ENCODE measurements at regions of chr5 and their contacts with region 1.

Region 1: GRCh38 chr5:179858586-179859427 is at the start of gene MRNIP:
- DNase-seq: peak; percentile 95
- H3K27ac ChIP-seq: peak within 1 kb of the TSS; percentile 88
- CTCF ChIP-seq: no peak

Region 2: DNA sequence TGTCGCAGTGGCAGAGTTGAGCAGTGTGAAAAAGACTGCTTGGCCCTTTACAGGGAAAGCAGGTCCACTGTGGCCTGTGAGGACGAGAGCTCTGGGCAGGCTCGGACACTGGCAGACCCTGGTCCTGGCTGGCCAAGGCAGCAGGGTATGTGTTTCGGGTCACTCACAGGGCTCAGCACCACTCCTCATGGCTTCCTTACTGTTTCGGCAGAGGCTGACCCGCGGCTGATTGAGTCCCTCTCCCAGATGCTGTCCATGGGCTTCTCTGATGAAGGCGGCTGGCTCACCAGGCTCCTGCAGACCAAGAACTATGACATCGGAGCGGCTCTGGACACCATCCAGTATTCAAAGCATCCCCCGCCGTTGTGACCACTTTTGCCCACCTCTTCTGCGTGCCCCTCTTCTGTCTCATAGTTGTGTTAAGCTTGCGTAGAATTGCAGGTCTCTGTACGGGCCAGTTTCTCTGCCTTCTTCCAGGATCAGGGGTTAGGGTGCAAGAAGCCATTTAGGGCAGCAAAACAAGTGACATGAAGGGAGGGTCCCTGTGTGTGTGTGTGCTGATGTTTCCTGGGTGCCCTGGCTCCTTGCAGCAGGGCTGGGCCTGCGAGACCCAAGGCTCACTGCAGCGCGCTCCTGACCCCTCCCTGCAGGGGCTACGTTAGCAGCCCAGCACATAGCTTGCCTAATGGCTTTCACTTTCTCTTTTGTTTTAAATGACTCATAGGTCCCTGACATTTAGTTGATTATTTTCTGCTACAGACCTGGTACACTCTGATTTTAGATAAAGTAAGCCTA is 22.4 kb before region 1 on chr5:
- CTCF ChIA-PET with region 1: no interaction called
- POLR2A ChIA-PET with region 1: no interaction called
- DNase-seq: peak; percentile 30
- H3K27ac ChIP-seq: peak overlapping the region; percentile 78
- CTCF ChIP-seq: no peak

Region 3: DNA sequence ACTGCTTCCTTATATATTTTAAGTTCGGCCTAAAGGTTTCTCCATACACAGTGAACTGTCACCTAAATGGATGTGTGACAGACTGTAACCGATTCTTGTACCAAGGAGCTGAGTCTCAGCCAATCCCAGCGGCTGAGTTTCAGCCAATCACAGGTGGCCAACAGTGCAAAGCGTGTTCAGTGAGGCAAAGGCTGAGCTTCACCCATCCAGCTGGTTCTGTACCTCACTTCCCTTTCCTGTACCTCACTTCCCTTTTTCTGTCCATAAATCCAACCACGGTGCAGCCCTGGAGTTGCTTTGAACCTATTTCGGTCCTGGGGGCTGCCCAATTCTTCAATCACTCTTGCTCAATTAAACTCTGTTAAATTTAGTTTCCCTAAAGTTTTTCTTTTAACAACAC is 64.6 kb after region 1 on chr5:
- CTCF ChIA-PET with region 1: no interaction called
- POLR2A ChIA-PET with region 1: no interaction called
- DNase-seq: no peak
- H3K27ac ChIP-seq: no peak overlapping the region
- CTCF ChIP-seq: no peak

Region 4: DNA sequence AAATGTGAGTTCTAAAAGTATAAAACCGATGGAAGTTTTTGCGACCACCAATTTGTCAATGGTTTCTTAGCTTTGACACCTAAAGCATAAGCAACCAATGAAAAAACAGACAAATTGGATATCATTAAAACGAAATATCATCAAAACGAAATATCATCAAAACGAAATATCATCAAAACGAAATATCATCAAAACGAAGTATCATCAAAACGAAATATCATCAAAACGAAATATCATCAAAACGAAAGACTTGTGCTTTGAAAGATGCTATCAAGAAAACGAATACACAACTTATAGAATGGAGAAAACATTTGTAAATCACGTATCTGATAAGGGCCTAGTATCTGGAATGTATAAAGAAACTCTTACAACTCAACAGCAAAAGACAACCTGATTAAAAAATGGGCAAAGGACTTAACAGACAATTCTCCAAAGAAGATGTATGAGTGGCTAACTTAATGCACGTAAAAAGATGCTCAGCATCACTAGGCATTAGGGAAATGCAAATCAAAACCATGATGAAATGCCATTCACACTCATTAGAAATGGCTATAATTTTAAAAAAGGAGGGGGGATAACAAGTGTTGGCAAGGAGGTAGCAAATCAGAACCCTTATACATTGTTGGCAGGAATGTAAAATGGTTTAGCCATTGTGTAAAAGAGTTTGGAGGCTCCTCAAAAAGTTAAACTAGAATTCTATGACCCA is 78.3 kb after region 1 on chr5:
- CTCF ChIA-PET with region 1: interaction called, 10 read pairs
- POLR2A ChIA-PET with region 1: no interaction called
- DNase-seq: no peak
- H3K27ac ChIP-seq: no peak overlapping the region
- CTCF ChIP-seq: no peak